WTC11 (cell line): ENCODE measurements at regions of chr11 and their contacts with region 1.

Region 1: GRCh38 chr11:17906436-17906835 is 106.4 kb downstream of the SERGEF start:
- DNase-seq: peak; percentile 87
- ATAC-seq: peak; percentile 99
- H3K4me3 Mint-ChIP-seq: no peak overlapping the region
- H3K27ac Mint-ChIP-seq: no peak overlapping the region
- H3K4me1 Mint-ChIP-seq: peaks cover 9% of the 10 kb centered on the region
- H3K27me3 Mint-ChIP-seq: no peaks in the 10 kb centered on the region
- CTCF ChIP-seq: no peak

Region 2: DNA sequence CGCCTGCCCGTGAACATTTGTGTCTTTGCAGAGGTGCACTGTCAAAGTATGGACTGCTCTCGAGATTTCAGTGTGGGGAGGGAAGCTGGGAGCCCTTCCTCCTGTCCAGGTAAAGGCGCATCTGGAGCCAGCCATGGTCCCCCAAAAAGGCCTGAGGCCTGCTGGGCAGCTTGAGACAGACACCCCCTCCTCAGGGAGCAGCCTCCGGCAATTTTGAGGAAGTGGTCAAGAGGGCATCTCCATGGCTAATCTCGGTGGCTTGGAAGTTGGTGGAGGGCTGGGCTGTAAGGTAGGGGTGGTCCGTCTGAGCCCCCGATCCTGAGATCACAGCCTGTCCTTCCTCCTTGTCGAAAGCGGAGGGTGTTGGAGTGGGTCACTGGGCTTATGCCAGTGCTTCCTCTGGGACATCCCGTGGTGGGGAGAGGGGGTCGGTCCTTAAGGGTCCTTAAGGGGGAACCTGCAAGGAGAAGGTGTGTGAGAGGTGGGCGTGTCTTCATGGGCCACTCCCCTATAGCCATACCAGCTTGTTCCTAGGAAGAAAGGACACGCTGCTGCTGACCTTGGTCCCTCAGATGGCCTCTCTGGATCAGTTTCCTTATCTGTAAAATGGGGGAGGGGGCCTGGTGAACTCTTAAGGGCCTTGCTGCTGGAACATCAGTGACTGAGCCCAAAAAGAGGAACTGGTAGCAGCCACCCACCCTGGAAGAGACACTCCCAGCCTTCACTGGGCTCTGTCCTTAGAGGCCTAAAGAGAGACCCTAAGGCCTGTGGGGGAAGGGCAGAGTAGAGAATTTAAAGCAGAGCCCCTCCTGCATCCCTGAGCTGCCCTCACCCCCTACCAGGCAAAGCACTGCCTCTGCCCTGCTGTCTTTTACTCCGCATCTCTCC is 169.3 kb before region 1 on chr11:
- CTCF ChIA-PET with region 1: interaction called, 57 read pairs
- POLR2A ChIA-PET with region 1: no interaction called
- DNase-seq: no peak
- ATAC-seq: no peak
- H3K4me3 Mint-ChIP-seq: no peak overlapping the region
- H3K27ac Mint-ChIP-seq: no peak overlapping the region
- H3K4me1 Mint-ChIP-seq: peaks cover 11% of the 10 kb centered on the region
- H3K27me3 Mint-ChIP-seq: peaks cover 24% of the 10 kb centered on the region
- CTCF ChIP-seq: no peak

Region 3: GRCh38 chr11:17786824-17787525 is 119.5 kb before region 1 on chr11:
- CTCF ChIA-PET with region 1: interaction called, 12 read pairs
- POLR2A ChIA-PET with region 1: no interaction called
- DNase-seq: no peak
- ATAC-seq: peak; percentile 74
- H3K4me3 Mint-ChIP-seq: no peak overlapping the region
- H3K27ac Mint-ChIP-seq: no peak overlapping the region
- H3K4me1 Mint-ChIP-seq: no peaks in the 10 kb centered on the region
- H3K27me3 Mint-ChIP-seq: no peaks in the 10 kb centered on the region
- CTCF ChIP-seq: no peak

Region 4: DNA sequence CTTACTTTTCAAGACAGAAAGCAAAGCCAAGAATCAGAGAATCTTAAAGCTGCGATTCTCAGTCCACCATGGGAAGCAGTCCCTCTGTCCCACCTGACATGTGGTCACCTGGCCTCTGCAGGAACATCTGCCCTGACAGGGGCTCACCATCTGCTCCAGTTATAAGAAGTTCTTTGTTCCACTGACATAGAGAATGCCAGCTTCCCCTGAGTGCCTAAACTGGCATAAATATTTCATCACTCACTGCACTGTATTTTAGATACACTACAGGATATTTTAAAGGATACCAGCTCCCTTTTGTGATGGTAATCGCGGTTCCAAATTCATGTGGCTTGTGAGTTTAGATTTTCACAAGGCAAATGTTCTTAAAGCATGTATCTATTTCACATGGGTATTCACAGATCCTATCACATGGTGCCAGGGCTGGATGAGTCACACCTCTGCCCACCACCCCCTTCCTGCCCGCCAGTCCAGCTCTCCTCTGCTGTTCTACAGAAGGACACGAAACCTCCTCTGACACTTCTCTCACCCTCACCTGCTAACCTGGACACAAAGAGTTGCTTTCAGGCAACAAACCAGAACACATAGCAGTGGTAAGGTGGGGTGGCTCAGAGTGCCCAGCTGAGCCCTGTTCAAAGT is 66.3 kb before region 1 on chr11:
- CTCF ChIA-PET with region 1: interaction called, 11 read pairs
- POLR2A ChIA-PET with region 1: no interaction called
- DNase-seq: no peak
- ATAC-seq: no peak
- H3K4me3 Mint-ChIP-seq: no peak overlapping the region
- H3K27ac Mint-ChIP-seq: no peak overlapping the region
- H3K4me1 Mint-ChIP-seq: peaks cover 4% of the 10 kb centered on the region; the same call in 1 of the 2 replicates
- H3K27me3 Mint-ChIP-seq: no peaks in the 10 kb centered on the region
- CTCF ChIP-seq: no peak

Region 5: DNA sequence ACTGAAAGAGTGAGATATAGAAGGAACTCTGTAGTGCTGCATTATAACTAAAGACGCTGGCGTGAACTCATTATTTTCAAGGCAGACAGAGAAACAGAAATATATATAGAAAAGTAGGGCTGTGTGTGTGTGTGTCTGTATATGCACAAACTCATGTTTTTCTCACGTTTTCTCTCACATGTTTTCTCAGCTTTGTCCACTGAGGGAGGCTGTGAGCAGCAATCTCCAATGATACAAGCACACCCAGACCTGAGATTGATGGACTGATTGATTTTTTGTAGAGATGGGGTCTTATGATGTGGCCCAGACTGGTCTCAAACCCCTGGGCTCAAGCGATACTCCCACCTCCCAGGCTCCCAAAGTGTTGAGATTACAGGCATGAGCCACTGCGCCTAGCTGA is 16.1 kb before region 1 on chr11:
- CTCF ChIA-PET with region 1: interaction called, 16 read pairs
- POLR2A ChIA-PET with region 1: no interaction called
- DNase-seq: no peak
- ATAC-seq: peak; percentile 34; the same call in 1 of the 2 replicates
- H3K4me3 Mint-ChIP-seq: no peak overlapping the region
- H3K27ac Mint-ChIP-seq: no peak overlapping the region
- H3K4me1 Mint-ChIP-seq: peaks cover 17% of the 10 kb centered on the region
- H3K27me3 Mint-ChIP-seq: no peaks in the 10 kb centered on the region
- CTCF ChIP-seq: no peak

Region 6: DNA sequence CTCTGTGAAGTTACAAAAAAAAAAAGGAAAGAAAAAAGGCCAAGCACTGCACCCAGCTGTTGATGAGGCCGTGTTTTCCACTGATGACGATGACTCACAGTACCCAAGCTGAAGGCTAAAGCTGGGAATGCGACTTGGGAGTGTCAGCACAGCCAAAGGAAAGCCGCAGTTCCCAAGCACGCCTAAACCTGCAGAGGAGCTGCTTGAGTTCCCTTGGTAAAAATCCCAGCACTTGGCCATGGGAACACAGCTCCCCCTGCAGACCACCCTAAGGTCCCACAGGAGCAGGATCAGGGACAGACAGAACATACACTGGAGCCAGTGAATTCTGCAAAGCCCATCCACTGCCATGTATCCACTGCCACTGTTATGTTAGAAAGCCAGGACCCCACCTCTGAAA is 66.6 kb after region 1 on chr11:
- CTCF ChIA-PET with region 1: interaction called, 40 read pairs
- POLR2A ChIA-PET with region 1: no interaction called
- DNase-seq: peak; percentile 79
- ATAC-seq: peak; percentile 99
- H3K4me3 Mint-ChIP-seq: no peak overlapping the region
- H3K27ac Mint-ChIP-seq: peak overlapping the region; percentile 74
- H3K4me1 Mint-ChIP-seq: 0 out of 2 replicates have a peak, but pooled peaks cover 3% of the 10 kb centered on the region
- H3K27me3 Mint-ChIP-seq: no peaks in the 10 kb centered on the region; the same call in 1 of the 2 replicates
- CTCF ChIP-seq: peak; percentile 67

Region 7: DNA sequence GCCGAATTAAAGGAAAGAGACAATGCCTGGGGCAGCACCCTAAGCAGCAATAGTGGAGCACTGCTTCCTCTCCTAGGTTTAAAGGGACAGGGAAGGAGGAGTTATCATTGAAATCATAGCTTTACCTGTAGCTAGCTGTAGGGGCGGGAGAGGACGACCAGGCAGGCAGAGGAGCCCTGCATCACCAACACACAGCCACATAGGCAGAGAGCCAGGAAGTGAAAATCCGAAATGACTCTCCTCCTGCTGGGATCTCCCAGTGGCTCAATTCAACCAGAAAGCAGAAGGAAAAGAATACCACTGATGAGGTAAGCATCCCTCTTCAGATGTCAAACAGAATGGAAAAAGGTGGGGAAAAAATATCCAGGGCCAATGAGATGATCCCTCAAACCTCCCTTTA is 286.6 kb after region 1 on chr11:
- CTCF ChIA-PET with region 1: no interaction called
- POLR2A ChIA-PET with region 1: no interaction called
- DNase-seq: peak; percentile 56
- ATAC-seq: peak; percentile 100
- H3K4me3 Mint-ChIP-seq: no peak overlapping the region
- H3K27ac Mint-ChIP-seq: no peak overlapping the region
- H3K4me1 Mint-ChIP-seq: peaks cover 12% of the 10 kb centered on the region
- H3K27me3 Mint-ChIP-seq: peaks cover 4% of the 10 kb centered on the region; the same call in 1 of the 2 replicates
- CTCF ChIP-seq: no peak